Posterior vena cava (tissue), 2 donors: ENCODE measurements at regions of chr4 and their contacts with region 1.

Region 1: GRCh38 chr4:158729716-158730559 is 6.7 kb upstream of the PPID start:
- DNase-seq: peak; percentile 85

Region 2: GRCh38 chr4:158042591-158043030 is 687.3 kb before region 1 on chr4:
- intact Hi-C with region 1: no loop called
- DNase-seq: no peak

Region 3: GRCh38 chr4:158845311-158846041 is 115.5 kb after region 1 on chr4:
- intact Hi-C with region 1: loop called (anchors 2 to 5 kb)
- DNase-seq: no peak

Region 4: GRCh38 chr4:158850800-158851644 is 121.1 kb after region 1 on chr4:
- intact Hi-C with region 1: loop called (anchors 2 to 5 kb)
- DNase-seq: no peak